MCF 10A (cell line): ENCODE measurements at regions of chr1 and their contacts with region 1.

Region 1: DNA sequence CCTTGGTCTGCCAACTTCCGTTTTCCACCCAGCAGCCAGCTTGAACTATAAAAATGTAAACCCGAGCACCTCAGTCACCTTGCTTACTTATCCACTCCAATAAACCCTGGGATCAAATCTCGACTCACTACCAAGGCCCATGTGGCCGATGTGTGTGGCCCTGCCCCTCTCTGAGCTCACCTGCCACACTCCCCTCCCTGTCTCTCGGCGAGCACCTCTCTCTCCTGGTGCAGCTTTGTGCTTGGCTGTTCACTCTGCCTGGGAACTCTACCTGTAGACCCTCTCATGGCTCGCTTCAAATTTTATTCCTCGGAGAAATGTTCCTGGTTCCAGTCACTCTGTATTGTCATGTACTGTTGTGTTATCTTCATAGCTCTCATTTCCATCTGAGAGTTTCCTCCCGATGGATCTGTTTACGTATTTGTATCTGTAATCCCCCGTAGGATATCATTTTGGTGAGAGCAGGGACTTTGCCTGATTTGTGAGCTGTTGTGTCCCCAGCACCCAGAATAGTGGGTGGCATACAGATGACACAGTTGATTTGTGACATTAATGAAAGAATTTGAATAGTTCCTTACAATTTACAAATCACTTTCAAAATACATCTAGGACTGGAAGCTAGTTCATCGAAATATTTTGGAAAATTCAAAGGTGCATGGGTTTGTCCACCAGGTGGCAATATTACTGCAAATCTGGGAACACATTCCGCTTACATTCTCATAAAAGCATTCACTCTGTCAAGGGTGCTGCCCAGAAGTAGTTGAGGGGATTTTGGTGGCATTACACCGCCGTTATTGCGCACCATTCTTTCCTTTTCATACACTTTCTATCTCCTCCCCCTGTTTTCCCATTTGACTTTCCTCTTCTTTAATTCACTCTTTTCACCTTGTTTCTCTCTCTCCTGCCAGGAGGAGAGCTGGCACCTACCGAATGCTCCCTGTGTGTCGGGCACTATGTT is 95.3 kb downstream of the ABCA4 start:
- DNase-seq: peak; percentile 77
- H3K4me3 Mint-ChIP-seq: no peak overlapping the region
- H3K27ac Mint-ChIP-seq: peak overlapping the region; percentile 77
- H3K4me1 Mint-ChIP-seq: peaks cover 36% of the 10 kb centered on the region
- H3K27me3 Mint-ChIP-seq: no peaks in the 10 kb centered on the region
- CTCF ChIP-seq: peak; percentile 72

Region 2: DNA sequence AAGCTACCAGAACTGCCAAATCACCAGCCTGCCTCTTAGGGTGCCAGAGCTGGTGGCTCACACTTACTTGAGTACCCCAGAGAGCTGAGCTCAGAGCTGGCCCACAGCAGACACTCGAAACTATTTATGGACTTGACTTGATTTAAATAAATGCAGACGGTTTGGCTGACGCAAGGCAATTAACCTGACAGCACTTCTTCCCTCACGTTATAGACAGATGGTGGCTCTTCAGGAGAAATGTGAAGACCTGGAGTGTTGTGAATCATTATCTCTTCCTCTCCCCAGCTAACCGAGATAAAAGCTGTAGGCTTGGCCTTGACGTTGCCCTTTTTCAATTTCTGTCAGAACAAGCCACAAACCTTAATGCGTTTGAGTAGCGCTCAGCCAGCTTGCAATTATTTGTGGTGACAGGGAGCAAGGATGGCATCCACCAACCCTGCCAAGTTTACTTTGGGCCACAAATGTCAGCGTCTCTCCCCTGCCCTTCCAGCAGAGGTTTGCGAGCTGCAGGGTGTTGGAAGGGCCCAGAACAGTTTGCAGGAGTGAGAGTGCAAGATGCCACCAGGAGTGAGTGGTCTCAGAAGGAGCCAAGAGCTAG is 310.0 kb before region 1 on chr1:
- CTCF ChIA-PET with region 1: no interaction called
- POLR2A ChIA-PET with region 1: no interaction called
- intact Hi-C with region 1: no loop called
- DNase-seq: no peak
- H3K4me3 Mint-ChIP-seq: no peak overlapping the region
- H3K27ac Mint-ChIP-seq: no peak overlapping the region
- H3K4me1 Mint-ChIP-seq: peaks cover 7% of the 10 kb centered on the region
- H3K27me3 Mint-ChIP-seq: no peaks in the 10 kb centered on the region
- CTCF ChIP-seq: no peak

Region 3: DNA sequence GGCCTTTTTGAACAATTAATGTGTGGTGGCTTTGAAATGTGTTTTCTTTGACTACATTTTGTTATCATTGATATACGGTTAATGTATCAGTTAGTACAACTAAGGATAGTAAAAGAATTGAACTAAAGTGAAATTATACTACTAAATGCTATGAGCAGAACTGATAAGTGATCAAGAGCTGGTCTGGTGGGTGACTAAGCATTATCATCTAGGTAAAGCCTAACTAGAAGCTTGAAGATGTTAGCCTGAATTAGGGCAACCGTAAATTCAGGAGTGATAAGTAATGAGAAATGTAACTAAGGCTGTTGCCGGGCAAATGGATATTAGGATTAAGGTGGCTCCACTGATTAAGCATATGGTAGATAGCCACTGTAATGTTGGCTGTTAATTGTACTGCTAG is 100.5 kb before region 1 on chr1:
- CTCF ChIA-PET with region 1: no interaction called
- POLR2A ChIA-PET with region 1: no interaction called
- intact Hi-C with region 1: no loop called
- DNase-seq: no peak
- H3K4me3 Mint-ChIP-seq: no peak overlapping the region
- H3K27ac Mint-ChIP-seq: no peak overlapping the region
- H3K4me1 Mint-ChIP-seq: no peaks in the 10 kb centered on the region
- H3K27me3 Mint-ChIP-seq: no peaks in the 10 kb centered on the region
- CTCF ChIP-seq: no peak

Region 4: GRCh38 chr1:94012686-94013624 is 12.7 kb before region 1 on chr1:
- CTCF ChIA-PET with region 1: interaction called, 31 read pairs
- POLR2A ChIA-PET with region 1: interaction called, 3 read pairs
- intact Hi-C with region 1: no loop called
- DNase-seq: no peak
- H3K4me3 Mint-ChIP-seq: no peak overlapping the region
- H3K27ac Mint-ChIP-seq: no peak overlapping the region
- H3K4me1 Mint-ChIP-seq: peaks cover 6% of the 10 kb centered on the region
- H3K27me3 Mint-ChIP-seq: no peaks in the 10 kb centered on the region
- CTCF ChIP-seq: no peak

Region 5: DNA sequence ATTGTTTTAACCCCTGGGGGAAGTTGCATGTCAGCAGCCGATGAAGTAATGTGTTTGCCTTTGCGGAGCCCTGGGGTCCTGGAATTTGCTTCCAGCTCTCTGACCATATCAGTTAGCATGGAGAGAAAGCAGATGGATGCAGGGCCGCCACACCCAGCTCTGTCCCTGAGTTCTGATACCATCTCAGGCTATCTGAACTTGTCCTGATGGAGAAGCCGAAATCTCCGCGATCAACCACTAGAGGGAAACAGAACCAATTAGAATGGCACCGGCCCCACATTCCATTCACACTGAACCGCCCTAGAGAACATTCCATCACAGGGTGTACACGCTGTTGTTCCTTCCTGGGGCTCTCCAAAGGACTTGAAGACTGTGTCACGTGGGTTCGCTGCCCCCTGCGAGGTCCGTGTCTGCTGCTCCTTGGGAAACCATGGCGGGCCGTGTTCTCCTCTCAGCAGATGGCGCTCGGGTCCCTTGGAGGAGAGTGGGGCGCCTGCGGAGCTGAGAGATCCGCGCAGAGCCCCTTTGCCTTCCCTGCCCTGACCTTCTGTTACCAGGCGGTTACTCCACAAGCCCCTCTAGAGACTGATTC is 19.9 kb after region 1 on chr1:
- CTCF ChIA-PET with region 1: interaction called, 304 read pairs
- POLR2A ChIA-PET with region 1: interaction called, 4 read pairs
- intact Hi-C with region 1: no loop called
- DNase-seq: peak; percentile 90
- H3K4me3 Mint-ChIP-seq: no peak overlapping the region
- H3K27ac Mint-ChIP-seq: peak overlapping the region; percentile 51
- H3K4me1 Mint-ChIP-seq: peaks cover 18% of the 10 kb centered on the region
- H3K27me3 Mint-ChIP-seq: no peaks in the 10 kb centered on the region
- CTCF ChIP-seq: peak; percentile 45

Region 6: DNA sequence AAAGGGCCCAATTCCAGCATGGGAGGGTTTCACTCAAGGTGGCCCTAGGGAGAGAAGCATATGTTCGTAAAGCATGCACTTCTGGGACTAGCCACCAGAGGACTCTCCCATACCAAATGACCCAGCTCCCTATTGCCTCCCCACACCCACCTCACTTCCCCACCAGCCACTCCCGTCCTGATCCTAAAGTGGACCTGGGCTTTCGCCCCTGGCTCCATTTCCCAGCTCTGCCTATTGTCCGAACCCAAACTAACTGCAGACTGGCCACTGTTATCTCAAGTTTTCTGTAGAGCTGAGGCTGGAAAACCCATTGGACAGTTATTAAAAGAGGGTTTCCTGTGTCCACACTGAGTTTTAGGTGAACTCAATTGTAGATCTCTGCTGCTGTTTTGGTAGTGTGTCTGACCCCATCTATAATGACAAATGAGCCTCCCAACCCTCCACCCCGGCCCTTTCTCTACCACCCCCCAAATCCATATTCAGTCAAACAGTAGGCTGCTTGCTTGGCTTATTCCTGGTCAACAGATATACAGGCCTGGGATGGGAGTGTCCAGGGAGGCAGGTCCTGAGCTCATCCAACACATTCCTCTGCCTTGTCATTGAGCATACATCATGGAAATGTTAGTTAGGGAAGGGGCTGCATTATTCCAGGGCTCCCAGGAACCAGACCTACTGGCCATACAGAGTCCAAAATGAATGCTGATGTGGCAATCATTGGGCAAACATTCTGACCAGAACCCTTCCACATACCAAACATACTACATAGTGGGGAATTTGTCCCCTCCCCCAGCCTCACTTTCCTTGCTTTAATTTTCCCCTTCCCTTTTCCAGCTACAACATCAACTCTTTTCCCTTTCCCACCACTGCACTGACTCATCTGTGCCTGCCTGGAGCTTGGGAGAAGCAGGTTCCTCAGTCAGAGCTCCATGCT is 36.1 kb after region 1 on chr1:
- CTCF ChIA-PET with region 1: interaction called, 80 read pairs
- POLR2A ChIA-PET with region 1: interaction called, 3 read pairs
- intact Hi-C with region 1: loop called (anchors 1 kb)
- DNase-seq: peak; percentile 76
- H3K4me3 Mint-ChIP-seq: no peak overlapping the region
- H3K27ac Mint-ChIP-seq: no peak overlapping the region
- H3K4me1 Mint-ChIP-seq: peaks cover 5% of the 10 kb centered on the region
- H3K27me3 Mint-ChIP-seq: no peaks in the 10 kb centered on the region
- CTCF ChIP-seq: peak; percentile 87